Tibial artery (tissue), 4 donors: ENCODE measurements at regions of chr1 and their contacts with region 1.

Region 1: GRCh38 chr1:65002508-65003315 is 36.4 kb upstream of the JAK1 start:
- DNase-seq: peak; percentile 95 to 98
- H3K4me3 ChIP-seq: peak overlapping the region; percentile 61 to 78
- H3K27ac ChIP-seq: peak overlapping the region; percentile 97 to 98
- H3K4me1 ChIP-seq: peaks cover 0 to 23% (median 12%) of the 10 kb centered on the region in 4 donors
- H3K27me3 ChIP-seq: no peaks in the 10 kb centered on the region
- CTCF ChIP-seq: no peak

Region 2: DNA sequence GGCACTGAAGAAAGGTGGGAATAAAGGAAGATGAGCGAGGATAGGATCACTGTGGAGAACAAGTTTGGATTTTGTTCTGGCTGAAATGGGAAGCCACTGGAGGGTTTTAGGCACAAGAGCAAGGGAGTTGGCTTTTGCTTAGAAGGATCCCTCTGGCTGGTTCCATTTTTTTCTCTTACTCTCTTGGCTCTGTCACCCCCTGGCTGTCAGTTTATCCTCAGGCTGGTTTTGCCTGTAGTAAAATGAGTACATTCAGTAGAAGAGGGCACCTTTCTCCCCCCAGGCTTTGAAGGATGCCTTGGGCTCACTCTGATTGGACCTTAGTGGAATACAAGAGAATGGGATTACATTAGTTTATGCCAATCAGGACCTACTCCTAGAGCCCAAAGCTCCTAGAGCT is 515.7 kb before region 1 on chr1:
- intact Hi-C with region 1: no loop called
- DNase-seq: no peak
- H3K4me3 ChIP-seq: no peak overlapping the region
- H3K27ac ChIP-seq: no peak overlapping the region
- H3K4me1 ChIP-seq: peaks cover 0 to 4% (median 0%) of the 10 kb centered on the region in 4 donors
- H3K27me3 ChIP-seq: no peaks in the 10 kb centered on the region
- CTCF ChIP-seq: no peak

Region 3: DNA sequence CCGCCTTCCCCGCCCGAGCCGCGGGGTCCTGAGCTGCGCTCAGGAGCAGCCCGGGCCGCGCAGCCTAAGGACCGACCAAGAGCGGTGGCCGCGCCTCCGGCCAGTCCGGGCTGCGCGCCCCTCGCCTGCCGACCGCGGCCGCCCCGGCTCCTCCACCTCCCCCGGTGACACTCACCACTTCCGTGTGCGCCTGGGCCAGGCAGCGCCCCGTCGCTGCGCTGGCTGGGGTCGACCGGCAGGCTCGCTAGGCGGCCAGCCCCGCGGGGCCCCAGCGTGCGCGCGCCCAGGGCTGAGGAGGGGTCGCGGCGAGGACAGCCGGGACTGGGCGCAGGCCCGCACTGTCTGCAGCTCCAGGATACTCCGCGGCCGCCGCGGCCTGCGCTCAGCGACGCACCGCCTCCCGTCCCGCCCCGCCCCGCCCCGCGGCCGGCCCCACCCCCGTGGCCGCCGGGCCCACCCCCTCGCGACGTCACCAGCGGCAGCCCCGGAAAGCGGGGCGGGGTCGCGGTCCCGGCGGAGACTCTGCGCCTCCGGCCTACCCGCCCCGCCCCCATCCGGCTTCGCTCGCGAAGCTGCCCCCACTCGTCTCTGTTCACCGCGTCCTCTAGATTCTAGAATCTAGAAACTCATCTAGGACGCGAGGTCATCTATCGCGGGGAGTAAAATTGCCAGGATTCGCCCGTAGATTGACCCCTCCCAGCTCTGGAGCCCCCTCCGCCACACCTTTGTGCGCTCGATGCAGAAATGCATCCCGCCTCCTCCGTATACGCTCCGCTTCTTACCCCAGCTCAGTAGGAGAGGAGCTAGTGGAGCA is 36.3 kb before region 1 on chr1 and contains the start of gene JAK1:
- intact Hi-C with region 1: loop called (anchors 5 kb)
- DNase-seq: peak; percentile 75 to 91
- H3K4me3 ChIP-seq: peak within 1 kb of the TSS; percentile 77 to 94
- H3K27ac ChIP-seq: peak within 1 kb of the TSS; percentile 78 to 96
- H3K4me1 ChIP-seq: peaks cover 0 to 17% (median 9%) of the 10 kb centered on the region in 4 donors
- H3K27me3 ChIP-seq: no peaks in the 10 kb centered on the region
- CTCF ChIP-seq: peak in 1 of 2 experiments; percentile 18

Region 4: DNA sequence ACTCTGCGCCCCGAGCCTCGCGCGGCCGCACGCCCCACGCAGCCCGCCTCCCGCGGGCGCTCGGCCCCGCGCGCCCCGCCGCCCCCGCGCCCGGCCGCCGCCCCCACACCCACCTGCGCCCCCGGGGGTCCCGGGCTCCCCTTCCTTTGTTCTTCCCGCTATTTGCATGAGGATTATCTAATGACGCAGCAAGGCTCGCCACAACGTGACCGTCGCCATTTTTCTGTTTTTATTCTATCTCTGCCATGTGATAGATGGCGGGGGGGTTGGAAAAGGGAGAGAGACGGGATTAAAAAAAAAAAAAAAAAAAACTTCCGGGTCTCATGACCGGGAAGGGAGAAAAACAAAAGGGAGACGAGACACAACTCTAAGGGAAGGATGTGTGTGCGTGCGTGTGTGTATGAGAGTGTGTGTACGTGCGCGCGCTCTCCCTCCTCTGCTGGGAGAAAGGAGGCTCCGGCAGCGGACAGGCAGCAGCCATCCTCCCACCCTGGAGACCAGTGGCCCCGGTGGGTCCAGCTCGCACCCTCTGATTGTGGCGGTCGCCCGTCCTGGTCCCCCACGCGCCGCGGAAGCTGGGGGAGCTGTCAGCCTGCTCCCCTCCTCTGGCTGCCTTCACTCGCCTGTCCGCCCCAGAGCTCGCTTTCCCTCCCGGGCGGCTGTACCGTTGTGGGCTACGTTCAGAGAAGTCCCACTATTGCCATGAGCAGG is 64.9 kb after region 1 on chr1:
- intact Hi-C with region 1: loop called (anchors 5 kb)
- DNase-seq: peak; percentile 85 to 88
- H3K4me3 ChIP-seq: peak overlapping the region; percentile 73 to 88
- H3K27ac ChIP-seq: peak overlapping the region; percentile 98 to 100
- H3K4me1 ChIP-seq: peaks cover 0 to 36% (median 25%) of the 10 kb centered on the region in 4 donors
- H3K27me3 ChIP-seq: no peaks in the 10 kb centered on the region
- CTCF ChIP-seq: no peak